Activated T-helper 2 cell treated with anti-CD3 and anti-CD28 coated beads, Interferon-gamma antibody, Interleukin-2, Interleukin-4, amounts not matched to agents 10 μg/mL and 5 μg/mL and 100 μg/mL, durations not matched to agents 14 hours and 24 hours and 36 hours (primary cell): ENCODE measurements at regions of chr3 and their contacts with region 1.

Region 1: DNA sequence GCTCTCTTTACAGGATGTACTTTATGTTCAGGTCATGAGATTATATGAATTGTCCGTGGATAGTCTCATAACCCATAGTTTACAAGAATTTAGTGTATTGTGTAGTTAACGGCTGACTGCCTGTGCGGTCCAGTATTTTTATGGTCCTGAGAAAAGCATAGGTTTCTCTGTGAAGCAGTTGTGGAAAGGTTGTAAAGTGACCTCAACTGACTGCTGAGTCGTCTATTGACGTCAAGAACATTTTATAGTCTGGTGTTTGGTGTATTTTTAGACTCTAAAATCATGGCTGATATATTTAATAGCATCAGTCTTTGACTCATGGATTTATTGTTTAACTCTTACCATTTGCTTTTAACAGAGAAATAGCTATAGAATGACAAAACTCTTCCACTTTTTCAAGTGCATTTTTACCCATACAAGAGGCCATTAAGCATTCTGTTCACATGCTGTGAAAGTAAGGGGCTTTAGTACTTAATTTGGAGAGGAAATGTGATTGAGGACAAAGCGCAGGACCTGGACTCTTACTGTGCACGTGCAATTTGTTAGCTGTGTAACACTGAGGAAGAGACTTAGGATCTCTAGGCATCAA is 240.7 kb downstream of the NFKBIZ start:
- DNase-seq: no peak
- H3K4me3 Mint-ChIP-seq: no peak overlapping the region
- H3K27ac Mint-ChIP-seq: peak overlapping the region; percentile 31
- H3K4me1 Mint-ChIP-seq: peaks cover 63% of the 10 kb centered on the region
- H3K27me3 Mint-ChIP-seq: no peaks in the 10 kb centered on the region

Region 2: DNA sequence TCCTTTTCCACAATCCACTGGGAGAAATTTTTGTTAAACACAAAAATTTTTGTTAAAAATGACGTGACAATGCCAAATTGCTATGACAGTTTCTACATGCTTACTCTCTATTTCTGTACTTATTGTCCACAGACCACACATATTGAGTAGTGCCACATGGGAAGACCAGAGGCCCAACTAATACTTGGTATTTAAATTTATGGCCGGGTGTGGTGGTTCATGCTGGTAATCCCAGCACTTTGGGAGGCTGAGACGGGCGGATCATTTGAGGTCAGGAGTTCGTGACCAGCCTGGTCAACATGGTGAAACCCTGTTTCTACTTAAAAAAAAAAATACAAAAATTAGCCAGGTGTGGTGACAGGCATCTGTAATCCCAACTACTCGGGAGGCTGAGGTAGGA is 433.3 kb before region 1 on chr3:
- intact Hi-C with region 1: no loop called
- DNase-seq: no peak
- H3K4me3 Mint-ChIP-seq: no peak overlapping the region
- H3K27ac Mint-ChIP-seq: no peak overlapping the region
- H3K4me1 Mint-ChIP-seq: no peaks in the 10 kb centered on the region
- H3K27me3 Mint-ChIP-seq: no peaks in the 10 kb centered on the region

Region 3: DNA sequence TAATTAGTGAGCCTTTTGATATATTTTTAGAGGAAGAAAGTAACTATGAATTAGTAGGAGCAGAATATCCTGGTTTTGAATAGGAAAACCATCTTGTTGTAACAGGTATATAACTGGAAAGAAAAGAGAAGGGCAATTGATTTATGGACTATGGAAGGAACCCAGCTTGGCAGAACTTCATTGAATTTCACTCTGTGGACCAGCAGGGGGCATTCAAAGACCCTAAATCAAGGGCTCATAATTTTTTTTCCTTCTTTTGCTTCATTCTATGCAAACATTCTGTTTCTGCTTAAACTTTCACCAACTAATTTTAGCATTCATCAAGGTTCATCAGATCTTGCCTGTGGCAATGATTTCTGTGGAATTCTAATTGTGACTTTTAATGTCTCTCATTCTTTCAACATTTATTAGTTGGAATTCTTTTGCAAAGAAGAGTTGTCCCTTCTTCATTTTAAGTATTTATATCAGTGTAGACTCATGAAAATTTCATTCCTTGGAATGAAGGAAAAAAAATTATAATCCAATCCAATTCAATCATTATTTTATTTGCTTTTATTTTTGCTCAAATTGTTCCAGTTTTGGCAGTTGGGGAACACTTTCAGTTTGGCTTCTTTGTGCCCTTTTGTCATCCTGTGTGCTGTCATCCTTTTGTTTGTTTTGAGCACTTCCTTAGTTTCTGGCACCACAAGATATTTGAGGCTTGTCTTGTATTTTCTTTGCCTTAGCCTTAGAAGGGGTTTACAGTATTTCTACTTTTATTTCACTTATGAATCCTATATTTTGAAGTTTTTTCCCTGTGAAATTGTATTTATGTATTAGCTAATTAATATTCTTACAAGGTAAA is 280.6 kb before region 1 on chr3:
- intact Hi-C with region 1: loop called (anchors 2 kb)
- DNase-seq: no peak
- H3K4me3 Mint-ChIP-seq: no peak overlapping the region
- H3K27ac Mint-ChIP-seq: peak overlapping the region; percentile 48
- H3K4me1 Mint-ChIP-seq: peaks cover 51% of the 10 kb centered on the region
- H3K27me3 Mint-ChIP-seq: no peaks in the 10 kb centered on the region

Region 4: DNA sequence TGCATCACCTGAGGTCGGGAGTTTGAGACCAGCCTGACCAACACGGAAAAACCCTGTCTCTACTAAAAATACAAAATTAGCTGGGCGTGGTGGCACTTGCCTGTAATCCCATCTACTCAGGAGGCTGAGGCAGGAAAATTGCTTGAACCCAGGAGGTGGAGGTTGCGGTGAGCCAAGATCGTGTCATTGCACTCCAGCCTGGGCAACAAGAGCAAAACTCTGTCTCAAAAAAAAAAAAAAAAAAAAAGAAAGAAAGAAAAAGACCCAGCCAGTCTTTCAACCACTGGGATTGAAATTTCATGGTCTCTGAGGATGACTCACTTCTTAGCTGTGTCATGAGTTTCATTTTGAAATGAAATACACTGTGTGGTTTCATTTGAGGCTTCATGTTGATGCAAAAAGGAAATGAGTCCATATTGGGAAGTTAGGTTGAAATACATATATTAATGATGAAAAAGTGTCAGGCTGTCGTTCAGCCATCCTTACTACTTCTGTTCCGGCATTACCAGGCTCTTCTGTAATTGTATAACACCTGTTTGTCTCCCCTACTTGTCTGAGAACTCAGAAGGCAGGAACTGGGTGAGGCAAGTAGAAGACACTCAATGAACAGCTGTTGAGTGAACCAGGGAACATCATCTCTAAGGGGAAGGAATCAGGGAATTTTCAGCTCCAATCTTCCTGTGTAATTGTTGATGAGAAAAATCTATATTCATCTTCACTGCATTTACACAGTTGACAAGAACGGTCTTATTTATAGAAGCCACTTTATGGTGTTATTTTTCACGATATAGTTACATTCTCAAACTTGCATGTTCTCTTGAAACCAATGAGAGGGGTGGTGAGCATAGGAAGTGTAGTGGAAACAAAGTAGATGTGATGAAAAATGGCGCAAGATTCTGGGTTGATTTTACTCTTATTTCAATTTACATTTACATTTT is 153.3 kb before region 1 on chr3:
- intact Hi-C with region 1: loop called (anchors 1 kb)
- DNase-seq: peak; percentile 18
- H3K4me3 Mint-ChIP-seq: peak overlapping the region; percentile 46
- H3K27ac Mint-ChIP-seq: peak overlapping the region; percentile 71
- H3K4me1 Mint-ChIP-seq: peaks cover 33% of the 10 kb centered on the region
- H3K27me3 Mint-ChIP-seq: peaks cover 16% of the 10 kb centered on the region

Region 5: GRCh38 chr3:101995371-101996046 is 94.5 kb before region 1 on chr3:
- intact Hi-C with region 1: loop called (anchors 1 kb)
- DNase-seq: no peak
- H3K4me3 Mint-ChIP-seq: peak overlapping the region; percentile 24
- H3K27ac Mint-ChIP-seq: peak overlapping the region; percentile 83
- H3K4me1 Mint-ChIP-seq: peaks cover 63% of the 10 kb centered on the region
- H3K27me3 Mint-ChIP-seq: peaks cover 2% of the 10 kb centered on the region

Region 6: GRCh38 chr3:102069211-102069662 is 20.8 kb before region 1 on chr3:
- intact Hi-C with region 1: loop called (anchors 2 kb)
- DNase-seq: no peak
- H3K4me3 Mint-ChIP-seq: no peak overlapping the region
- H3K27ac Mint-ChIP-seq: peak overlapping the region; percentile 79
- H3K4me1 Mint-ChIP-seq: peaks cover 19% of the 10 kb centered on the region
- H3K27me3 Mint-ChIP-seq: no peaks in the 10 kb centered on the region

Region 7: GRCh38 chr3:102163036-102163827 is 73.2 kb after region 1 on chr3:
- intact Hi-C with region 1: loop called (anchors 1 kb)
- DNase-seq: no peak
- H3K4me3 Mint-ChIP-seq: no peak overlapping the region
- H3K27ac Mint-ChIP-seq: peak overlapping the region; percentile 46
- H3K4me1 Mint-ChIP-seq: peaks cover 20% of the 10 kb centered on the region
- H3K27me3 Mint-ChIP-seq: no peaks in the 10 kb centered on the region